ENCODE measurements at regions of chr5 and their contacts with region 1.

Region 1: GRCh38 chr5:76337953-76338451 is 65.1 kb upstream of the IQGAP2 start:
- DNase-seq: peak; percentile 55 to 62 (median 58)
- H3K4me3 ChIP-seq: no peak overlapping the region
- H3K4me3 Mint-ChIP-seq: peak overlapping the region in 4 of 8 donors; percentile 16 to 54 (median 25)
- H3K27ac ChIP-seq: no peak overlapping the region
- H3K27ac Mint-ChIP-seq: peak overlapping the region in 5 of 7 donors; percentile 36 to 70 (median 66)
- H3K4me1 ChIP-seq: peaks cover 33% of the 10 kb centered on the region
- H3K4me1 Mint-ChIP-seq: peaks cover 28 to 42% (median 30%) of the 10 kb centered on the region in 4 donors
- H3K27me3 ChIP-seq: no peaks in the 10 kb centered on the region
- H3K27me3 Mint-ChIP-seq: no peaks in the 10 kb centered on the region

Region 2: GRCh38 chr5:76363352-76364225 is 25.6 kb after region 1 on chr5:
- CTCF ChIA-PET with region 1: no interaction called
- POLR2A ChIA-PET with region 1: no interaction called
- intact Hi-C with region 1: no loop called
- DNase-seq: no peak
- H3K4me3 ChIP-seq: no peak overlapping the region
- H3K4me3 Mint-ChIP-seq: no peak overlapping the region
- H3K27ac ChIP-seq: no peak overlapping the region
- H3K27ac Mint-ChIP-seq: peak overlapping the region in 1 of 7 donors; percentile 44
- H3K4me1 ChIP-seq: no peaks in the 10 kb centered on the region
- H3K4me1 Mint-ChIP-seq: peaks cover 0 to 5% (median 2%) of the 10 kb centered on the region in 4 donors
- H3K27me3 ChIP-seq: no peaks in the 10 kb centered on the region
- H3K27me3 Mint-ChIP-seq: no peaks in the 10 kb centered on the region

Region 3: GRCh38 chr5:76386360-76386759 is 48.4 kb after region 1 on chr5:
- CTCF ChIA-PET with region 1: interaction called, 11 read pairs
- POLR2A ChIA-PET with region 1: interaction called, 5 read pairs
- intact Hi-C with region 1: no loop called
- DNase-seq: no peak
- H3K4me3 ChIP-seq: no peak overlapping the region
- H3K4me3 Mint-ChIP-seq: no peak overlapping the region
- H3K27ac ChIP-seq: no peak overlapping the region
- H3K27ac Mint-ChIP-seq: peak overlapping the region in 2 of 7 donors; percentile 8 to 57
- H3K4me1 ChIP-seq: peaks cover 54% of the 10 kb centered on the region
- H3K4me1 Mint-ChIP-seq: peaks cover 35 to 65% (median 45%) of the 10 kb centered on the region in 4 donors
- H3K27me3 ChIP-seq: no peaks in the 10 kb centered on the region
- H3K27me3 Mint-ChIP-seq: no peaks in the 10 kb centered on the region

Region 4: GRCh38 chr5:76641514-76642120 is 303.6 kb after region 1 on chr5:
- CTCF ChIA-PET with region 1: no interaction called
- POLR2A ChIA-PET with region 1: no interaction called
- intact Hi-C with region 1: loop called (anchors 1 kb)
- DNase-seq: peak; percentile 47 to 60 (median 56)
- H3K4me3 ChIP-seq: no peak overlapping the region
- H3K4me3 Mint-ChIP-seq: no peak overlapping the region
- H3K27ac ChIP-seq: no peak overlapping the region
- H3K27ac Mint-ChIP-seq: peak overlapping the region in 3 of 7 donors; percentile 9 to 61 (median 34)
- H3K4me1 ChIP-seq: no peaks in the 10 kb centered on the region
- H3K4me1 Mint-ChIP-seq: peaks cover 0 to 3% (median 1%) of the 10 kb centered on the region in 4 donors
- H3K27me3 ChIP-seq: no peaks in the 10 kb centered on the region
- H3K27me3 Mint-ChIP-seq: no peaks in the 10 kb centered on the region